Activated naive CD4-positive, alpha-beta T cell treated with anti-CD3 and anti-CD28 coated beads for 36 hours (primary cell): ENCODE measurements at regions of chr3 and their contacts with region 1.

Region 1: GRCh38 chr3:61858056-61858455 is 296.7 kb downstream of the PTPRG start:
- DNase-seq: no peak
- H3K4me3 Mint-ChIP-seq: no peak overlapping the region
- H3K27ac Mint-ChIP-seq: no peak overlapping the region
- H3K4me1 Mint-ChIP-seq: no peaks in the 10 kb centered on the region
- H3K27me3 Mint-ChIP-seq: peaks cover 9% of the 10 kb centered on the region

Region 2: GRCh38 chr3:61936344-61936937 is 78.4 kb after region 1 on chr3:
- CTCF ChIA-PET with region 1: no interaction called
- intact Hi-C with region 1: loop called (anchors 10 kb)
- DNase-seq: peak; percentile 42
- H3K4me3 Mint-ChIP-seq: no peak overlapping the region
- H3K27ac Mint-ChIP-seq: no peak overlapping the region
- H3K4me1 Mint-ChIP-seq: no peaks in the 10 kb centered on the region
- H3K27me3 Mint-ChIP-seq: peaks cover 7% of the 10 kb centered on the region

Region 3: DNA sequence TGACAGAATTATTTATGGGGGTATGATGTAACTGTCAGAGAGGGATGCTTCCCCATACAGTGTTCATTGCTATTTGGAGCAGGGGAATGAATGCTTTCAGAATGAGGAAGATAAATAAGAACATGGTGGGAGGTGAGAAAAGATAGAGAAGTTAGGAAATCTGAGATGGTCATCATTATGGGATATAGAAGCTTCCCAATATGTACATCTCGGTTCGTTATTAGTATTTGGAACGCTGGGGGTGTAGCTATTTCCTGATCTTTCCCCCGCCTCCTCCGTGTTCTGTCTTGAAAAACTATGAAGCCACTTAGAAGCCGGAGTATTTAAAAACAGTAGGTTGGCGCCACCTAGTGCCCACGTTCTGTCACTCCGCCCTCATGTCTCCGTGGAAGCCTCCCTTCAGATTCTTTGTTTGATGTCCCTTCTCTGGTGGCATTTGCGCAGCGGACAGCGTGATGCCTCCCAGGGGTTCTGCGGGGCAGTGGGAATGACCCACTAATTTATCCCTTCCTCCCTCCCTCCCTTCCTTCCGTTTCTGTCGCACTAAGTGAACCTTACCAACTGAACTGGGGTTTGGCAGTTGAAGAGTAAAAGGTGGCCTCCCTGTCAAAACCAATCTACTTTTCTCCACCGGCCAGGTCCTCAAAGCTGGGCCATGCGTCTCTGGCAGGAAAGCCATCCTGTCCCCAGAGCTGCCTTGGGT is 330.8 kb after region 1 on chr3:
- CTCF ChIA-PET with region 1: no interaction called
- intact Hi-C with region 1: loop called (anchors 1 kb)
- DNase-seq: peak; percentile 81
- H3K4me3 Mint-ChIP-seq: no peak overlapping the region
- H3K27ac Mint-ChIP-seq: no peak overlapping the region
- H3K4me1 Mint-ChIP-seq: peaks cover 3% of the 10 kb centered on the region
- H3K27me3 Mint-ChIP-seq: no peaks in the 10 kb centered on the region